Heart left ventricle (tissue), 16 donors: ENCODE measurements at regions of chr19 and their contacts with region 1.

Region 1: DNA sequence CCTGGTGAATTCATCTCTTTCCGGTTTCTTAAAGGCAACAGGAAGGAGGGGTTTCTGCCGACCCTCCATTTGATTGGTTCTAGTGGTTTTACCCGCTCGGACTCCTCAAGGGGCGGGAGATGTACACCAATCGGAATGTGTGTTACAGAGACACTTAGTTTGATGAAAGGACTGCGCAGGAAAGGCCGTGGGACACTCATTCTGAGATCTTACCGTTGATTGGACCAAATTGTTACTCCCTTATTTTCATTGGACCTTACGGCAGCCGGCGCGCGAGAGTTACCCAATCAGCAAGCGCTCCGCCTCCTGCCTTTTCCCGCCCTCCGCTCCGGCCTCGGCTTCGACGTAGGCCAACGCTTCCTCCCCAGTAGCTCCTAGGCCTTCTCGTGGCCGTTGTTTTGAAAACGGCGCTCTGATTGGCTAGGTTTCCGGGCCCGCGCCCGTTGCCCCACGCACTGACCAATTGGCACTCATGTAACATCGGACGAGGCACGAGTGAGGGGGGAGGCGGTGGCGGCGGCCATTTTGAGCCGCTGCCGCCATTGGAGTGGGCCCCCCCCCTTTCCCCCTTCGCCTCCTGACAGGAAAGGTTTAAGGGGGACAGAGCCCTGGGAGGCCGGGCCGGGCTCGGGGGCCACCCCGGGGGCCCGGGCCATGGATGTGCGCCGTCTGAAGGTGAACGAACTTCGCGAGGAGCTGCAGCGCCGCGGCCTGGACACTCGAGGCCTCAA is at the start of gene HNRNPUL1:
- DNase-seq: peak; percentile 99
- ATAC-seq: peak; percentile 86 to 91 (median 87)
- H3K4me3 ChIP-seq: peak within 1 kb of the TSS; percentile 71 to 99 (median 92)
- H3K27ac ChIP-seq: peak within 1 kb of the TSS; percentile 91 to 100 (median 99)
- H3K4me1 ChIP-seq: peaks cover 3 to 36% (median 29%) of the 10 kb centered on the region in 12 donors
- H3K27me3 ChIP-seq: no peaks in the 10 kb centered on the region
- CTCF ChIP-seq: peak in 7 of 12 donors; percentile 10 to 49 (median 30)
- POLR2A ChIP-seq: peak in 1 of 2 donors; percentile 35
- total RNA-seq, gene HNRNPUL1: 88.7 to 138 (median 115) TPM

Region 2: GRCh38 chr19:41133260-41133659 is 130.8 kb before region 1 on chr19:
- intact Hi-C with region 1: loop called in 2 of 10 experiments (anchors 5 kb)
- DNase-seq: peak in 1 of 5 donors; percentile 31
- ATAC-seq: peak in 1 of 4 donors; percentile 18
- H3K4me3 ChIP-seq: no peak overlapping the region
- H3K27ac ChIP-seq: no peak overlapping the region
- H3K4me1 ChIP-seq: peaks cover 0 to 13% (median under 1%) of the 10 kb centered on the region in 12 donors
- H3K27me3 ChIP-seq: no peaks in the 10 kb centered on the region
- CTCF ChIP-seq: no peak
- POLR2A ChIP-seq: no peak

Region 3: GRCh38 chr19:41226053-41226873 is 37.8 kb before region 1 on chr19:
- intact Hi-C with region 1: loop called in 2 of 10 experiments (anchors 5 kb)
- DNase-seq: peak; percentile 70 to 81 (median 75)
- ATAC-seq: peak; percentile 27 to 81 (median 72)
- H3K4me3 ChIP-seq: peak overlapping the region; percentile 21 to 62 (median 53)
- H3K27ac ChIP-seq: peak overlapping the region; percentile 60 to 94 (median 79)
- H3K4me1 ChIP-seq: peaks cover 0 to 26% (median 14%) of the 10 kb centered on the region in 12 donors
- H3K27me3 ChIP-seq: peaks cover 0 to 17% (median 0%) of the 10 kb centered on the region in 9 donors
- CTCF ChIP-seq: peak in 2 of 12 donors; percentile 20 to 22
- POLR2A ChIP-seq: peak in 1 of 2 donors; percentile 18

Region 4: GRCh38 chr19:41353466-41354342 is 89.7 kb after region 1 on chr19 and contains the start of gene TGFB1:
- intact Hi-C with region 1: loop called in 1 of 10 experiments (anchors 5 kb)
- DNase-seq: peak; percentile 90 to 97 (median 91)
- ATAC-seq: peak; percentile 64 to 78 (median 72)
- H3K4me3 ChIP-seq: peak within 1 kb of the TSS; percentile 52 to 98 (median 74)
- H3K27ac ChIP-seq: peak within 1 kb of the TSS; percentile 67 to 96 (median 90)
- H3K4me1 ChIP-seq: peaks cover 0 to 73% (median 25%) of the 10 kb centered on the region in 12 donors
- H3K27me3 ChIP-seq: no peaks in the 10 kb centered on the region
- CTCF ChIP-seq: peak; percentile 78 to 98 (median 90)
- POLR2A ChIP-seq: peak in 1 of 2 donors; percentile 65
- total RNA-seq, gene TGFB1: 9.4 to 68.8 (median 13.9) TPM

Region 5: DNA sequence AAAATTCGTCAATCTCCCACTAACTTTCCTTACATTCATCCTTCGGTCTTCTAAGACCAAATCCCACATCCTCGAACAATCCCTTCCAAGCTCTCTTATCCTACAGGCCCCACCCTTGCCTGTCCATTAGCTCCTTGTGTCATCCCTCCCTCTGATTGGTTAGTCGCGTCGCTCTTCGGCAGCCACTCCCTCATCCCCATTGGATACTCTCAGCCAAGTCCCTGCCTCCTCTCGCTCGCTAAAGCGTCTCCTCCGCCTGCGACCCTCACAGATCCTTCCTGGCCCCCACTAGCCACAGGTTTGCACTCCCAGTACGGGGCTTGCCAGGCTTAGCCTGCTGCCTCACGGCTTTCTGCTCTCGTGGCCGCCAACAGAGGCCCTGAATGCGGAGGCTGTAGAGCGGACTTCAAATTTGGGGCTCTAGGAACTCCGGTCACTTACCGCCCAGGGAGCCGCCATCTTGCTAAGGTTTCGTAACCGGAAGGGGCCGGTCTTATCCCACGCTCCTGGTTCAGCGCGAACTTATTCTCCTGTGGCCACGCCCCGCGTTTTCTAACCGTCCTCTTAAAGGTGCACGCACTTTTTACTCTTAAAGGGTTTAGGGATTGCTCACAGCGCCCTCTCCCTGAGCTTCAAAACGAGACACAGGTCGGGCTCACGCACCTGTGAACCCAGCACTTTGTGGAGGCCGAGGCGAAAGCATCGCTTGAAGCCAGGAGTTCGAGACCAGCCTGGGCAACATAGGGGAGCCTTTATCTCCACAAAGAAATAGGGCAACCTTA is 175.6 kb after region 1 on chr19 and contains the start of gene DMAC2:
- intact Hi-C with region 1: loop called in 2 of 10 experiments (anchors 5 kb)
- DNase-seq: peak; percentile 94 to 98 (median 97)
- ATAC-seq: peak; percentile 96 to 99 (median 98)
- H3K4me3 ChIP-seq: peak within 1 kb of the TSS; percentile 29 to 90 (median 76)
- H3K27ac ChIP-seq: peak within 1 kb of the TSS; percentile 84 to 100 (median 94)
- H3K4me1 ChIP-seq: peaks cover 0 to 21% (median 12%) of the 10 kb centered on the region in 12 donors
- H3K27me3 ChIP-seq: no peaks in the 10 kb centered on the region
- CTCF ChIP-seq: peak; percentile 21 to 71 (median 47)
- POLR2A ChIP-seq: peak in 1 of 2 donors; percentile 46
- total RNA-seq, gene DMAC2: 67.9 to 138 (median 102) TPM